ENCODE measurements at regions of chr1 and their contacts with region 1.

Region 1: DNA sequence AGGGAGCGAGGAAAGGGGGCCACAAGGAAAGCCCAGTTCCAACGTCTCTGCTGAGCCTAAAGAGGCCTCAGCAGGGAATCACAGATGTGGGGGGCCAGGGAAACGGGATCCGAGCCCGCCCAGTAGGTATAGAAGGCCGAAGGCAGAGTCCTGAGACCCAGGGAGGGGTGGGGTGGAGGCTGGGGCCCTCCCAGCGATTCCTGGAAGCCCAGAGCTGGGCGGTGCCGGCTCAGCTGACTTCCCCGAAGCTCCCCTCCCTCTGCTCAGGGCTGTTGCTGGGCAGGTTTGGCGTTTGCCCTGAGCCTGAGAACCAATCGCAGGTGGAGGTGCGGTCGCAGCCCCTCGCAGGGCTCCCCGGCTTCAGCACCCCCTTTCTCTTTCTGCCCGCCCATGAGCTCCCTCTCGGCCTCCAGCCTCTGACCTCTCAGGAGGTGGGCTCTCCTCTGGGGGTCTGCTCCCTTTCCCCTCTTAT is 12.8 kb downstream of the ADAMTSL4 start:
- DNase-seq: peak; percentile 97
- H3K4me3 Mint-ChIP-seq: peak overlapping the region; percentile 99
- H3K27ac Mint-ChIP-seq: peak overlapping the region; percentile 100
- H3K4me1 Mint-ChIP-seq: peaks cover 55% of the 10 kb centered on the region
- H3K27me3 Mint-ChIP-seq: no peaks in the 10 kb centered on the region

Region 2: DNA sequence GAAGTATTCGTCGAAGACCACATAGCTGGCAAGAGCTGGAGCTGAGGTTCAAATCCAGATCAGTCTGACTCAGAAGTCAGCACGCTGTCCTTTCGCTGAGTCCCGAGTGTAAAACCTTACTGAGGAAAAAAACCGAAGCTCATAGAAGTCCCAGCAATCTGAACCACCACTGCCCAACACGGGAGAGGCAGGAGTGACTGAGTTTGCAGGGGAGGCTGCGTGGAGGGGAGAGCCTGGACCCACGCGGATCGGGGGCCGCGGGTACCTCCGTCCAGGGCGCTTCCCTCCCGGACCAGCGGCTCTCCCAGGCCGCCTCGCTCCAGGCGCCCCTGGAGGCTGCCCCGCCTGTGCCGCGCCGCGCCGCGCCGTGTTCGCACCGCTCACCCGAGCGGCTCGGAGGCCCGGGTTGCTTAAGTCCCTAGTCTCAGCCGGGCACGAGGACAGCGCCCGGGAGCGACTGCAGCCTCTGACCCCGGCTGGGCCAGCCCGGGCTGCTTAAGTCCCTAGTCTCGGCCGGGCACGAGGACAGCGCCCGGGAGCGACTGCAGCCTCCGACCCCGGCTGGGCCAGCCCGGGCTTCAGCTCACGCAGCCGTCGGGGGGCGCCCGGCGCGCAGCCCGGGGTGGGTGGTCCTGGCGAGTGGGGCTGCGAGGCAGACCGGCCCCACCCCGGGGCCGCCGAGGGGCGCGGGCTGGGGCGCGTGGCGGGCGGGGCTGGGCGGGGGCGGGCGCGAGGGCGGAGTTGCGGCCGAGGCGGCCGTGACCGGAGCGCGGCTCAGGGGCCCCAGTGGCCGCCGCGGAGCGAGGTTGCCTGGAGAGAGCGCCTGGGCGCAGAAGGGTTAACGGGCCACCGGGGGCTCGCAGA is 13.1 kb before region 1 on chr1 and contains the start of gene ADAMTSL4:
- CTCF ChIA-PET with region 1: interaction called, 20 read pairs
- intact Hi-C with region 1: no loop called
- DNase-seq: peak; percentile 47
- H3K4me3 Mint-ChIP-seq: peak within 1 kb of the TSS; percentile 76
- H3K27ac Mint-ChIP-seq: no peak within 1 kb of the TSS
- H3K4me1 Mint-ChIP-seq: peaks cover 32% of the 10 kb centered on the region
- H3K27me3 Mint-ChIP-seq: peaks cover 33% of the 10 kb centered on the region
- total RNA-seq, gene ADAMTSL4: 1.3 to 2.0 TPM

Region 3: DNA sequence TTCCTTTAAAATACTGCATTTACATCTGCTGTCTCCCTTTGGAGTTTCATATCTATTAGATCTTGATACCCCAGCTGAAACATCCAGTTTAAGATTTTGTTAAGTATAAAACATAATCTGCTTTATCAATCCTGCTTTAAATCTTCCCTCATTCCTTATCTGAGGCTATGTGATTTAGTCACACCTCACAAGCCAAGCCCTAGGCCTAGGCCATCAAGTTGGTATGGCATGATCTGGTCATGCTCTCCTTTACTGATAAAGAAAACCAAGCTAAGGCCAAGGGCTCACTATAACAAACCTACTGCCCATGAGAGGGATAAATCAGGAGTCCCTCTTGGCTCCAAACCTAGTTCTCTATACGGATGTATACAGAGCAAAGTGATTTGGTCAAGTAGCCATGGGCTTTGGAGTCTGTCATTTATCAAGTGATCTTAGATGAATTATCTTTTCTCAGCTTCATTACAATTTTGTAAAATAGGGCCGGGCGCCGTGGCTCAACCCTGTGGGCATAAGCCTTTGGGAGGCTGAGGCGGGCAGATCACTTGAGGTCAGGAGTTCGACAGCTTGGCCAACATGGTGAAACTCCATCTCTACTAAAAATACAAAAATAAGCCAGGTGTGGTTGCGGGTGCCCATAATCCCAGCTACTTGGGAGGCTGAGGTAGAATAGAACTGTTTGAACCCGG is 44.6 kb after region 1 on chr1:
- CTCF ChIA-PET with region 1: interaction called, 88 read pairs
- intact Hi-C with region 1: loop called (anchors 1 kb)
- DNase-seq: no peak
- H3K4me3 Mint-ChIP-seq: no peak overlapping the region
- H3K27ac Mint-ChIP-seq: no peak overlapping the region
- H3K4me1 Mint-ChIP-seq: peaks cover 35% of the 10 kb centered on the region
- H3K27me3 Mint-ChIP-seq: no peaks in the 10 kb centered on the region

Region 4: DNA sequence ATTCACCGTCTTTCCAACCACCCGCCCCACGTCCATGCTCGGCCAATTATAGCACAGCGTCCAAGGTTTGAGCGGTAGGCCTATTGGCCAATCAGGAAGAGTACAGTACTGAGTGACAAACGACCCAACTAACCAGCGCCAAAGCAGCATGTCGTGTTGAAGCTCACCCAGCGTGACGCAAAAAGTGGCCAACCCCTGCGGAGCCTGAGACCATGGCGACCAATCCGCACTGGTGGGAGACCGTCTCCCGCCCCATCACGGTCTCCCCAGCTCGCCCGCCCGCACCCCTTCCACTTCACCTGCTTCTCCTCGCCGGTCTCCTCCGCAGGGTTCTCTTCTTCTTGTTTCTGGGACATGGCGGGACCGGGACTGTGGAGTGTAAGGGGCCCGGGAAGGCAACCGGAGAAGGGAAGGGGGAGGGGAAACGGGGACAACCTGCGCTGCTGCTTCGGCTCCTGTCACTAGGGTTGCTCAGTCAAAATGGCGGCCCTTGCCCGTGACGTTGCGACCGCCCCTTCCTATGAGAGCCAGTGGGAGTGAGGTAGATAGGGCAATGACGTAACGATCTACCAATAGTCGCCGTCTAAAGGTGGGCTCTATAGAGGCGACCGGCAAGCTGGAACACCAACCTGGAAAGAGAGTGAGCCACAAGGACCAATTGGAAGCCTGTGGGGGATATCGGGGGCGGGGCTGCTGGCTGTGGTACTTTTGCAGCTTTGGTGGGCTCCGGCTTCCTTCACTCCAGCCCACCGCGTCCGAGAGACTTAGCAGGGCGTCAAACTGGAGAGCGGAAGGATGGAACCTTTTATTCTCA is 67.3 kb after region 1 on chr1 and contains the start of gene ENSA:
- CTCF ChIA-PET with region 1: interaction called, 167 read pairs
- intact Hi-C with region 1: no loop called
- DNase-seq: peak; percentile 98
- H3K4me3 Mint-ChIP-seq: no peak within 1 kb of the TSS
- H3K27ac Mint-ChIP-seq: peak within 1 kb of the TSS; percentile 54
- H3K4me1 Mint-ChIP-seq: peaks cover 42% of the 10 kb centered on the region
- H3K27me3 Mint-ChIP-seq: no peaks in the 10 kb centered on the region
- total RNA-seq, gene ENSA: 187 to 193 TPM

Region 5: GRCh38 chr1:150876119-150876454 is 314.1 kb after region 1 on chr1:
- CTCF ChIA-PET with region 1: no interaction called
- intact Hi-C with region 1: loop called (anchors 1 kb)
- DNase-seq: peak; percentile 58
- H3K4me3 Mint-ChIP-seq: peak overlapping the region; percentile 83
- H3K27ac Mint-ChIP-seq: peak overlapping the region; percentile 83
- H3K4me1 Mint-ChIP-seq: peaks cover 18% of the 10 kb centered on the region
- H3K27me3 Mint-ChIP-seq: no peaks in the 10 kb centered on the region

Region 6: GRCh38 chr1:150971593-150972416 is 409.8 kb after region 1 on chr1:
- CTCF ChIA-PET with region 1: no interaction called
- intact Hi-C with region 1: no loop called
- DNase-seq: no peak
- H3K4me3 Mint-ChIP-seq: peak overlapping the region; percentile 85
- H3K27ac Mint-ChIP-seq: peak overlapping the region; percentile 86
- H3K4me1 Mint-ChIP-seq: peaks cover 47% of the 10 kb centered on the region
- H3K27me3 Mint-ChIP-seq: no peaks in the 10 kb centered on the region

Region 7: DNA sequence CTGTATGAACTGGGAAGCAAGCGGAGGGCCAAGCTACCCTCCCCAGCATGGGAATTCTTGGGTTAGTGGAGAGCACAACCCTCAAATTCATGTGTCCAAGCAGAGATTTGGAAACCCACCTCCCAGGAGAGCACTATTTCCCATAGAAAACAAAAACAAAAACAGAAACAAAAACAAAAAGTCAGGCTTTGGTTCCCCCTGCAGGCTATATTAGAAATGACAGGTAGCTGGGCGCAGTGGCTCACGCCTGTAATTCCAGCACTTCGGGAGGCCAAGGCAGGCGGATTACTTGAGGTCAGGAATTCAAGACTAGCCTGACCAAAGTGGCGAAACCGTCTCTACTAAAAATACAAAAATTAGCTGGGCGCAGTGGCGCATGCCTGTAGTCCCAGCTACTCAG is 433.9 kb after region 1 on chr1:
- CTCF ChIA-PET with region 1: interaction called, 3 read pairs
- intact Hi-C with region 1: loop called (anchors 1 kb)
- DNase-seq: peak; percentile 36
- H3K4me3 Mint-ChIP-seq: no peak overlapping the region
- H3K27ac Mint-ChIP-seq: peak overlapping the region; percentile 41
- H3K4me1 Mint-ChIP-seq: peaks cover 25% of the 10 kb centered on the region
- H3K27me3 Mint-ChIP-seq: no peaks in the 10 kb centered on the region

Measured in activated naive CD4-positive, alpha-beta T cell treated with anti-CD3 and anti-CD28 coated beads for 36 hours (primary cell).